ENCODE measurements at regions of chr9 and their contacts with region 1.

Region 1: GRCh38 chr9:104293877-104294276 is 199.8 kb downstream of the SMC2 start:
- DNase-seq: no peak
- ATAC-seq: no peak
- H3K4me3 ChIP-seq: no peak overlapping the region
- H3K27ac ChIP-seq: no peak overlapping the region
- H3K4me1 ChIP-seq: no peaks in the 10 kb centered on the region
- H3K27me3 ChIP-seq: no peaks in the 10 kb centered on the region

Region 2: DNA sequence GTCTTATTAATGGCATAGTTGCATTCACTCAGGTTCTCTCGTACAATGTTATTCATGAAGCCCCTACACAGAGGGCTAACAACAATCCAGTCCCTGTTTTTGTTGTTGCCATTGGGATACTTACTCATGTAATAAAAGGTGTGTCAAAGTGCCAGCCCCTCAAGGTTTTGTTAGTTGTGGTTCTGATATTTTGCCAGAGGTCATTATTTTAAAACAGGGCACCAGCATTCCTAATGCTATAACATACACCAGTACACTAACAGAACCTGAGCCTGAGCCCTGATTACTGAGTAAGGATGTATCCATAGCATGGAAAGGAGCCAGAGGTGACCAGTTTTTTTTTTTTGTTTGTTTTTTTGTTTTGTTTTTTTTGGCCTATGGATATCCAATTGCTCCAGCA is 149.5 kb before region 1 on chr9:
- intact Hi-C with region 1: no loop called
- DNase-seq: no peak
- ATAC-seq: no peak
- H3K4me3 ChIP-seq: no peak overlapping the region
- H3K27ac ChIP-seq: no peak overlapping the region
- H3K4me1 ChIP-seq: no peaks in the 10 kb centered on the region
- H3K27me3 ChIP-seq: no peaks in the 10 kb centered on the region

Region 3: DNA sequence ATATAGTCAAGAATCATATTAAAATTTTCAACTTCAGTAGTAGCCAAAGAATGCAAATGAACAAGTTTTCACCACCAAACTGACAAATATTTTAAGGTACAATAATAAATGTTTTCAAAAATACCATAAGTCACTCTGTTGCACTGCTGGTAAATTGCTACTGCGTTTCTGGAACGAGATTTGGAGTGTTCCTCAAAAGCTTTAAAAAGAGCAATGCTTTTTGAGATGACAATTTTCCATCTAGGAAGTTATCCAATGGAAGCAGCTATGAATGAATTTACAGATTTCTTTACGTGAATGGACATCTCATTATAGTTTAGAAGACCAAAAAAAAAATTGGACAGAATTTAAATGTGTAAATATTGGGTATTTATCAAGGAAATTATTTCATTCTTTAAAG is 37.0 kb after region 1 on chr9:
- intact Hi-C with region 1: loop called in 1 of 4 experiments (anchors 5 kb)
- DNase-seq: no peak
- ATAC-seq: no peak
- H3K4me3 ChIP-seq: no peak overlapping the region
- H3K27ac ChIP-seq: no peak overlapping the region
- H3K4me1 ChIP-seq: no peaks in the 10 kb centered on the region
- H3K27me3 ChIP-seq: no peaks in the 10 kb centered on the region